H1 (cell line): ENCODE measurements at regions of chr12 and their contacts with region 1.

Region 1: DNA sequence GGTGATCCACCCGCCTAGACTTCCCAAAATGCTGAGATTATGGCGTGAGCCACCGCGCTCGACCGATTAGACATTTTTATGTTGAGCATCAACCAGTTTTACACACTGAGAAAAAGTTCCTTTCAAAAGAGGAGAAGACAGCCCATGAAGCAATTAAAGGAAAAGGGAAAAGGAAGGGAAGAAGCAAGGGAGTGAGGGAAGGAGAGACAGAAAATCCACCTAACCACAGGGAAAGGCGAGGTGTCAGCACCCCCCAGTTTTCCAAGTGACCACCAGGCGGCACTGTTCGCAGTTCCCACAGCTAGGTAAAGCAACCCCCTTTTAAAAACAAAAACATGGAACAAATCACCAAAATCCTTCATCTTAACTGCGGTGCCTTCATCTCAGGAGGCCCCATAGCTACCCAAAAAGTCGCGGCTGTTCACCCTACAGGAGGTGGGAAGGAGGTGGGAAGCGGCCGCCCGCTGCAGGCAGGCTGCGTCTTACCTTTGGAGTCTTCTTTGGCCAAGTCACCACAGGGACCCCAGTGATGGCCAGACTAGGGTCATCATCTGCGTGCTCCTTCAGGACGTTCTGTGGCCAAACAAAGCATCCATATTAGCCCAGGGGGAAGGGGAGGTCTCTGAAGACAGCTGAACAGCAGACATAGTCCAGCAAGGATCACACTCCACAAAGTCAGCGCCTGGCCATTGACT is 86.6 kb downstream of the KDM2B start:
- DNase-seq: peak; percentile 33 to 90
- H3K4me3 ChIP-seq: no peak overlapping the region
- H3K27ac ChIP-seq: no peak overlapping the region
- H3K4me1 ChIP-seq: no peaks in the 10 kb centered on the region; a peak in 2 of 7 replicates
- H3K27me3 ChIP-seq: no peaks in the 10 kb centered on the region
- CTCF ChIP-seq: peak; percentile 83 to 95 (median 90)
- EP300 ChIP-seq: no peak
- POLR2A ChIP-seq: no peak
- RAD21 ChIP-seq: peak; percentile 43 to 56

Region 2: GRCh38 chr12:121423682-121424623 is 70.3 kb before region 1 on chr12:
- CTCF ChIA-PET with region 1: no interaction called
- POLR2A ChIA-PET with region 1: no interaction called
- DNase-seq: no peak
- H3K4me3 ChIP-seq: no peak overlapping the region
- H3K27ac ChIP-seq: no peak overlapping the region
- H3K4me1 ChIP-seq: no peaks in the 10 kb centered on the region
- H3K27me3 ChIP-seq: no peaks in the 10 kb centered on the region
- CTCF ChIP-seq: no peak
- EP300 ChIP-seq: no peak
- POLR2A ChIP-seq: peak in 1 of 2 experiments; percentile 0; a peak in 1 of 3 replicates
- RAD21 ChIP-seq: no peak

Region 3: DNA sequence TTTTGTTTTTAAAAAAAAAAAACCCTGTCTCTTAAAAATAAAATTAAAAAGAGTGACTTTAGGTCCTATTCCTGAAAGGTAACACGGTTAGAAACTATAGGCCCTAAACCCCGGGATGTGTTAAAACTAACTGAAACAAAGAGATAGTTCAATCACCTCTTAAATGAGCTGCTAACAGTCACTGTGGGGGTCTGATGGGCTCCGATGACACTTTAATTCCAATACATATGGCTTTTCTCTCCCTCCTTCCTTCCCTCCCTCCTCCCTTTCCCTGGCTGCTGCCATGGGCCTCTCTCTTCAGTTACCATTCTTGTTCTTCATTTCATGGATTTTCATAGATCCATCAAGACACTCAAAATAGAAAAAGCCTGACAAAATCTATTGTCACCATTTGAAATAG is 17.8 kb before region 1 on chr12:
- CTCF ChIA-PET with region 1: interaction called, 46 read pairs
- POLR2A ChIA-PET with region 1: no interaction called
- DNase-seq: no peak
- H3K4me3 ChIP-seq: no peak overlapping the region
- H3K27ac ChIP-seq: no peak overlapping the region
- H3K4me1 ChIP-seq: peaks cover 0 to 3% (median 2%) of the 10 kb centered on the region in 4 experiments; a peak in 1 of 7 replicates
- H3K27me3 ChIP-seq: no peaks in the 10 kb centered on the region
- CTCF ChIP-seq: no peak
- EP300 ChIP-seq: no peak
- POLR2A ChIP-seq: no peak
- RAD21 ChIP-seq: no peak

Region 4: GRCh38 chr12:121505513-121505912 is 11.3 kb after region 1 on chr12:
- CTCF ChIA-PET with region 1: interaction called, 21 read pairs
- POLR2A ChIA-PET with region 1: interaction called, 5 read pairs
- DNase-seq: no peak
- H3K4me3 ChIP-seq: no peak overlapping the region
- H3K27ac ChIP-seq: no peak overlapping the region
- H3K4me1 ChIP-seq: no peaks in the 10 kb centered on the region
- H3K27me3 ChIP-seq: no peaks in the 10 kb centered on the region
- CTCF ChIP-seq: no peak
- EP300 ChIP-seq: no peak
- POLR2A ChIP-seq: no peak
- RAD21 ChIP-seq: no peak

Region 5: GRCh38 chr12:121741743-121742142 is 247.5 kb after region 1 on chr12:
- CTCF ChIA-PET with region 1: no interaction called
- POLR2A ChIA-PET with region 1: no interaction called
- DNase-seq: no peak
- H3K4me3 ChIP-seq: no peak overlapping the region
- H3K27ac ChIP-seq: no peak overlapping the region
- H3K4me1 ChIP-seq: no peaks in the 10 kb centered on the region
- H3K27me3 ChIP-seq: no peaks in the 10 kb centered on the region
- CTCF ChIP-seq: no peak
- EP300 ChIP-seq: no peak
- POLR2A ChIP-seq: no peak
- RAD21 ChIP-seq: no peak